Esophagus muscularis mucosa (tissue), 4 donors: ENCODE measurements at regions of chr9 and their contacts with region 1.

Region 1: GRCh38 chr9:135864447-135865049 is 42.8 kb downstream of the CAMSAP1 start:
- DNase-seq: no peak
- H3K4me3 ChIP-seq: no peak overlapping the region
- H3K27ac ChIP-seq: no peak overlapping the region
- H3K4me1 ChIP-seq: peaks cover 0 to 10% (median 8%) of the 10 kb centered on the region in 4 donors
- H3K27me3 ChIP-seq: no peaks in the 10 kb centered on the region
- CTCF ChIP-seq: peak; percentile 67 to 94 (median 73)
- EP300 ChIP-seq: no peak
- POLR2A ChIP-seq: no peak

Region 2: GRCh38 chr9:135907431-135908092 is 43.0 kb after region 1 on chr9 and contains the start of gene CAMSAP1:
- intact Hi-C with region 1: loop called (anchors 2 kb)
- DNase-seq: peak; percentile 97
- H3K4me3 ChIP-seq: peak within 1 kb of the TSS; percentile 83 to 93 (median 92)
- H3K27ac ChIP-seq: peak within 1 kb of the TSS; percentile 78 to 86 (median 82)
- H3K4me1 ChIP-seq: peaks cover 41 to 61% (median 47%) of the 10 kb centered on the region in 4 donors
- H3K27me3 ChIP-seq: no peaks in the 10 kb centered on the region
- CTCF ChIP-seq: no peak
- EP300 ChIP-seq: no peak
- POLR2A ChIP-seq: peak; percentile 45
- total RNA-seq, gene CAMSAP1: 21.0 to 52.7 (median 30.5) TPM

Region 3: DNA sequence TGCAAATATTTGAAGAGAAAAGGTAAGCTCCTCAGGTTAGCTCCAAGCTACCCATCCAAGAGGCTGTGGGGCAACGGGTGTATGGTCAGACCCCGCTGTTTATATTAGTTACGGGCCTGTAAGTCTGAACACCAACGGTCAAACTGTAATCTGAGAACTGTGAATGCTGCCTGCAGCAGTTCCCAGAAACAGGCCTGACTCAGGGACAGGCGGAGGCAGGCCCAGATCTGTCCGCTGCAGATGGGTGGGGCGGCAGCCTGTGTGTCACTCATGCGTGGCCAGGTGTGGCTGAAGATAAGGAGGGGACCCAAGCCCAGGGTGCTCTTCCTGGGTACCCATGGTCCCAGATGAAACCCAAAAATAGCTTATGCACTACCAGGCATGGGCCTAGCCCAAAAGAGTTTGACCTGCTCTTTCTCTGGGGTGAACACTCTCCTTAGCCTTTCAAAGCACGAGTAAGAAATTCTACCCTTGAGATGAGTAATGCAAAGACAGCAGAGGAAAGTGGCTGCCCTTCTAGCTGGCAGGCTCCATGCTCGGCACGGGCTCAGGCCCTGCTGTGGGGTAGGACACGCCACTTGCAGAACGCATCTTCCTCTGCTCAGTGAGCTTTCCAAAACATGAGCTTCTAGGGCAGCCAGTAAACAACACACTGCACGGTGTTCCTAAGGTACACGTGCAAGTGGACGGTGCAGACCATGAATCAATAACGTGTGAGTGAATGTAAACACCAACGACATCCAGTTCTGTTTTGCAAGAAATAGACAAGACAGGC is 87.5 kb after region 1 on chr9:
- intact Hi-C with region 1: loop called (anchors 10 kb)
- DNase-seq: no peak
- H3K4me3 ChIP-seq: no peak overlapping the region
- H3K27ac ChIP-seq: no peak overlapping the region
- H3K4me1 ChIP-seq: peaks cover 0 to 10% (median 8%) of the 10 kb centered on the region in 4 donors
- H3K27me3 ChIP-seq: no peaks in the 10 kb centered on the region
- CTCF ChIP-seq: no peak
- EP300 ChIP-seq: no peak
- POLR2A ChIP-seq: no peak